ENCODE measurements at regions of chr20 and their contacts with region 1.

Region 1: GRCh38 chr20:35269055-35269781 is 8.7 kb downstream of the MMP24OS start:
- DNase-seq: peak; percentile 68
- ATAC-seq: peak; percentile 82
- H3K4me3 Mint-ChIP-seq: no peak overlapping the region
- H3K27ac Mint-ChIP-seq: no peak overlapping the region
- H3K4me1 Mint-ChIP-seq: peaks cover 11% of the 10 kb centered on the region
- H3K27me3 Mint-ChIP-seq: no peaks in the 10 kb centered on the region

Region 2: DNA sequence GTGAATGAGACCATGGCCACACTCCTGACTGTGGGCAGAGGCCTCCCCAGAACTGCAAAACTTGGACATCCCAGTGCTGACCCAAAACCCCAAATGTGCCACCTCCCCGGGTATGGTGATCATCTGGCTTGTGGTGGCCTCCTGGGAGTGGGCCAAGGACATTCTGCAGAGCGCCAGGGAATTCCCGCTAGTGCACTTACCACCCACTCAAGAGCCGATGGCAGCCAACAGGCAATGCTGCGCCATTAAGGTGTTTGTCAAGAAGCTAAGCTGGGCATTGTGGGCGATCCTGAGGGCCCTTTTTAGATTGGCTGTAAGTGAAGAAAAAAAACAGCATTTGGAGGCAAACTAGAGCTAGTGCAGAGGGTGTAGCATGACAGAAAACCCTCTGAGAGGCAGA is 33.3 kb before region 1 on chr20:
- CTCF ChIA-PET with region 1: no interaction called
- DNase-seq: no peak
- ATAC-seq: no peak
- H3K4me3 Mint-ChIP-seq: no peak overlapping the region
- H3K27ac Mint-ChIP-seq: no peak overlapping the region
- H3K4me1 Mint-ChIP-seq: peaks cover 10% of the 10 kb centered on the region
- H3K27me3 Mint-ChIP-seq: peaks cover 4% of the 10 kb centered on the region

Region 3: GRCh38 chr20:35284267-35284991 is 15.2 kb after region 1 on chr20 and contains the start of gene EIF6:
- CTCF ChIA-PET with region 1: interaction called, 11 read pairs
- DNase-seq: peak; percentile 87
- ATAC-seq: peak; percentile 89
- H3K4me3 Mint-ChIP-seq: peak within 1 kb of the TSS; percentile 84
- H3K27ac Mint-ChIP-seq: peak within 1 kb of the TSS; percentile 90
- H3K4me1 Mint-ChIP-seq: peaks cover 30% of the 10 kb centered on the region
- H3K27me3 Mint-ChIP-seq: no peaks in the 10 kb centered on the region
- total RNA-seq, gene EIF6: 98.6 to 121 TPM

Measured in activated CD8-positive, alpha-beta memory T cell treated with anti-CD3 and anti-CD28 coated beads, Interleukin-2, amount 10 ng/mL, durations not matched to agents 7 days and 5 days (primary cell).